GM10248 (cell line): ENCODE measurements at regions of chr1 and their contacts with region 1.

Region 1: GRCh38 chr1:39816415-39817090 is 27.9 kb upstream of the BMP8B start:
- DNase-seq: peak; percentile 79
- CTCF ChIP-seq: peak; percentile 67

Region 2: GRCh38 chr1:39554277-39554676 is 262.3 kb before region 1 on chr1:
- CTCF ChIA-PET with region 1: no interaction called
- POLR2A ChIA-PET with region 1: no interaction called
- DNase-seq: no peak
- CTCF ChIP-seq: no peak

Region 3: DNA sequence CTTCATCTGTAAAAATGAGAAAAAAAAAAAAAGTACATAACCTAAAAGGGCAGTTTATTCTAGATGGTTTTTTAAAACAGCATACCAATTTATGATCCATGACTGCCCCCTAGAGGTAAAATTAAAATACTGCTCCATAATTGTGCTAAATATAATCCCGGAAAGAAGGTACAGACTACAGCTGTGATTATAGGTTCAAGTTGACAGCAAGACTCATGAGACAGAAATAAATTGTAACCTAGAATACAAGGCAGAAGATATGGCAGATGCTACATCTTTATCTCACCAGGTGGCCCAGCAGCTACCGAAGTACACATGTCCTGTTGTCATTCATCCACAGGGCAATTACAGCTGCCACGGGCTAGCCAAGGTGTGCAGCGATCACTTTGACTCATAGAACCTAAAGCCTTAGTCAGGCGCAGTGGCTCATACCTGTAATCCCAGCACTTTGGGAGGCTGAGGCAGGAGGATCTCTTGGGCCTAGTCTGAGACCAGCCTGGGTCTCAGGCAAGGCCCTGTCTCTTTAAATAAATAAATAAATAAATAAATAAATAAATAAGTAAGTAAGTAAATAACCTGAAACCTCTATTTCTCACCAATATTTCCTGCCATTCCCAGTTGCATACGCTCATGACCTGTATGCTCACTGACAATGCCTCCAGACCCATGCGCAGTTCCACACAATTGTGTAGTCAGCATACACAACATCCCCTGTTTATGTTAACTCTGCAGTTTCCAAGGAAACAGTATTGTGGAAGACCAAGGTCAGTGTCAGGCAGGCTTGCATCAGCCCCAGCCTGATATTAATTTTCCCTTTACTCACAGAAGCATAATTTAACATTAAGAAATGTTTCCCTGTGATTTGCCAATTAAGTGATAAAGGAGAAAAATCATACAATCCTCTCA is 96.2 kb before region 1 on chr1:
- CTCF ChIA-PET with region 1: no interaction called
- POLR2A ChIA-PET with region 1: no interaction called
- DNase-seq: peak; percentile 47
- CTCF ChIP-seq: peak; percentile 51

Region 4: GRCh38 chr1:39829791-39830533 is 13.4 kb after region 1 on chr1:
- CTCF ChIA-PET with region 1: interaction called, 34 read pairs
- POLR2A ChIA-PET with region 1: no interaction called
- DNase-seq: no peak
- CTCF ChIP-seq: no peak

Region 5: GRCh38 chr1:39835935-39836594 is 19.5 kb after region 1 on chr1:
- CTCF ChIA-PET with region 1: interaction called, 34 read pairs
- POLR2A ChIA-PET with region 1: no interaction called
- DNase-seq: no peak
- CTCF ChIP-seq: no peak